Right ventricle myocardium inferior (tissue), 1 donor: ENCODE measurements at regions of chr3 and their contacts with region 1.

Region 1: GRCh38 chr3:141050576-141051442 is at the start of gene SPSB4:
- DNase-seq: peak; percentile 83
- ATAC-seq: peak; percentile 93
- total RNA-seq, gene SPSB4: 7.1 TPM

Region 2: DNA sequence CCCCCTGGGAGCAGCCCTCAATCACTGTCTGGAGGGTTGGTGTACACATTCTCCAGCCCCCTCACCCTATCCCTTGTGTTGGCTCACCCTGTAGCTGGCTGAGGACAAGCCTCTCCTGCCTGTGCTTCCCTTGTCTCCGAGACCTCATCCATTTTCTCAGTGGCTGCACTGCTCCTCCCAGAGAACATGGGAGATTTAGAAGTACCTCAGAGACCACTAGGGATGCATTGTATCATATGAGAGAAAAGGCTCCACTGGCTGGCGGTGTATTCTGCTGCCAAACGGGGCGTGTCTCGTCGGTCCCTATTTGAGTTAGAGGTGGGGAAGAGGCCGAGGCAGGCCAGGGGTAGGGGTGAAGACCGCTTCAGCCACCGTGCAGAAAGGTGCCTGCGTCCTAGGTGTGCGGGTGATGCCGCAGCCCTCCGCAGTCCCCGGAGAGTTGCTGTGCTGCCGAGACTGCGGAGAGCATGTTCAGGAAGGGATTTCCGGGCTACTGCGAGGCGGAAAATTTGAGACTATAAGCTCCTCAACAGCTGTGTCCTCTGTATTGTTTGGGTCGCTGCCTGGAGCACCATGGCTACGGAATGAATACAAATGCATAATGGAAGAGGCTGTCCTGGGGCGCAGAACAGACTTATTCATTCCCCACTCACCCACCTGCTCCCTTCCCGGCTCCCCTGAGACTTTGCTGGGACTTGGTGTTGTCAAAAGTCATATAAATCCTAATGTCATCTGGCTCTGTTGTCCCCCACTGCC is 44.2 kb after region 1 on chr3:
- intact Hi-C with region 1: loop called (anchors 5 kb)
- DNase-seq: peak; percentile 89
- ATAC-seq: peak; percentile 87

Region 3: GRCh38 chr3:141105828-141106628 is 55.2 kb after region 1 on chr3:
- intact Hi-C with region 1: loop called (anchors 1 kb)
- DNase-seq: no peak
- ATAC-seq: no peak

Region 4: GRCh38 chr3:141243271-141243707 is 192.5 kb after region 1 on chr3:
- intact Hi-C with region 1: no loop called
- DNase-seq: no peak
- ATAC-seq: no peak

Region 5: GRCh38 chr3:142022381-142022780 is 971.6 kb after region 1 on chr3:
- intact Hi-C with region 1: no loop called
- DNase-seq: no peak
- ATAC-seq: no peak